Activated CD4-positive, alpha-beta T cell treated with anti-CD3 and anti-CD28 coated beads for 36 hours (primary cell): ENCODE measurements at regions of chr12 and their contacts with region 1.

Region 1: DNA sequence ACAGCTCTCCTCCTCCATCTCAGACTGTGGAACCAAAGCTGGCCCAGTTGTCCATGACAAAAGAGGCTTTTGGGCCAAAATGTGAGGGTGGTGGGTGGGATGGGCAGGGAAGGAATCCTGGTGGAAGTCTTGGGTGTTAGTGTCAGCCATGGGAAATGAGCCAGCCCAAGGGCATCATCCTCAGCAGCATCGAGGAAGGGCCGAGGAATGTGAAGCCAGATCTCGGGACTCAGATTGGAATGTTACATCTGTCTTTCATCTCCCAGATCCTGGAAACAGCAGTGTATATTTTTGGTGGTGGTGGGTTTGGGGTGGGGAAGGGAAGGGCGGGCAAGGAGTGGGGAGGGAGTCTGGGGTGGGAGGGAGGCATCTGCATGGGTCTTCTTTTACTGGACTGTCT is 11.8 kb upstream of the TAMALIN start:
- DNase-seq: no peak
- ATAC-seq: no peak
- H3K4me3 Mint-ChIP-seq: no peak overlapping the region
- H3K27ac Mint-ChIP-seq: no peak overlapping the region
- H3K4me1 Mint-ChIP-seq: peaks cover 2% of the 10 kb centered on the region
- H3K27me3 Mint-ChIP-seq: no peaks in the 10 kb centered on the region

Region 2: GRCh38 chr12:51980051-51980808 is 14.7 kb before region 1 on chr12:
- CTCF ChIA-PET with region 1: interaction called, 11 read pairs
- POLR2A ChIA-PET with region 1: no interaction called
- intact Hi-C with region 1: no loop called
- DNase-seq: peak; percentile 81
- ATAC-seq: peak; percentile 96
- H3K4me3 Mint-ChIP-seq: no peak overlapping the region
- H3K27ac Mint-ChIP-seq: peak overlapping the region; percentile 17
- H3K4me1 Mint-ChIP-seq: peaks cover 34% of the 10 kb centered on the region
- H3K27me3 Mint-ChIP-seq: no peaks in the 10 kb centered on the region

Region 3: GRCh38 chr12:52082988-52083637 is 88.2 kb after region 1 on chr12:
- CTCF ChIA-PET with region 1: interaction called, 4 read pairs
- POLR2A ChIA-PET with region 1: no interaction called
- intact Hi-C with region 1: loop called in 1 of 2 experiments (anchors 1 kb)
- DNase-seq: peak; percentile 81
- ATAC-seq: peak; percentile 83
- H3K4me3 Mint-ChIP-seq: no peak overlapping the region
- H3K27ac Mint-ChIP-seq: no peak overlapping the region
- H3K4me1 Mint-ChIP-seq: peaks cover 8% of the 10 kb centered on the region
- H3K27me3 Mint-ChIP-seq: peaks cover 7% of the 10 kb centered on the region

Region 4: DNA sequence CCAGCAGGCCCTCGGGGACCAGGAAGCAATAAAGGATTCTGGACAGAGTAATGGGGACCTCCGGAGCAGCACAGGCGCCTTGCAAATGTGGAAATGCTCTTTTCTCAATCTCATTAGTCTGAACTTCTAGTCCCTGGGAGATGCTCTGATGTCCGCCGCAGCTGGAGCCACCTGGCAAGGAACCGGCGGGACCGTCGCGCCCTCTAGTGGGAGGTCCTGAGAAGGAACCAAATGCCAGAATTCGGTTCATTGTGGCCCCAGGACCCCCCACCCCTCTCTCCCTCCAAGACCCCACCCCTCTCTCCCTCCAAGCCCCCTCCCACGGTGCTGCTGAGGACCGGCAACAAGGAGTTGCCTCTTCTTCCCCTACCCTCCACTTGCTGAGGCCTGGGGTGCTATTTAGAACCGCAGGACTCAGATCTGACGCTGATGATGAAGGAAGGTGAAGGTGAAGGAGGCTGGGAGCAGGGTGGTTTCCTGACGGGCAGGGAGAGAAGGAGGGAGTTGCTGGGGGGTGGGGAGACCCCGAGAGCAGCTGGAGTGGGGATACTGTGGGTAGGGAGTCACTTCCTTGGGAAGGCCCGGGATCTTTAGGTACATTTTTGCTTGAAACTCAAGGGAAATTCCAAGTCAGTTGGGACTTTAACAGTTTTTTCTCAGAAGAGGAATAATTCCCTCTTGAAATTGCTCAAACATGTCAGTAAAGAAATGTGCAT is 127.0 kb after region 1 on chr12:
- CTCF ChIA-PET with region 1: interaction called, 5 read pairs
- POLR2A ChIA-PET with region 1: no interaction called
- intact Hi-C with region 1: loop called in 1 of 2 experiments (anchors 2 kb)
- DNase-seq: peak; percentile 84
- ATAC-seq: no peak
- H3K4me3 Mint-ChIP-seq: no peak overlapping the region
- H3K27ac Mint-ChIP-seq: no peak overlapping the region
- H3K4me1 Mint-ChIP-seq: peaks cover 19% of the 10 kb centered on the region
- H3K27me3 Mint-ChIP-seq: peaks cover 20% of the 10 kb centered on the region